CD8-positive, alpha-beta memory T cell (primary cell): ENCODE measurements at regions of chr3 and their contacts with region 1.

Region 1: GRCh38 chr3:38521391-38521987 is 25.3 kb downstream of the EXOG start:
- DNase-seq: peak; percentile 21 to 74 (median 51)
- H3K4me3 ChIP-seq: no peak overlapping the region
- H3K4me3 Mint-ChIP-seq: peak overlapping the region in 1 of 7 donors; percentile 21
- H3K27ac ChIP-seq: no peak overlapping the region
- H3K27ac Mint-ChIP-seq: peak overlapping the region in 3 of 8 donors; percentile 43 to 95 (median 77)
- H3K4me1 ChIP-seq: peaks cover 27% of the 10 kb centered on the region
- H3K4me1 Mint-ChIP-seq: peaks cover 33 to 43% (median 39%) of the 10 kb centered on the region in 3 donors
- H3K27me3 ChIP-seq: no peaks in the 10 kb centered on the region
- H3K27me3 Mint-ChIP-seq: no peaks in the 10 kb centered on the region

Region 2: GRCh38 chr3:38496131-38496910 is 25.2 kb before region 1 on chr3 and contains the start of gene EXOG:
- CTCF ChIA-PET with region 1: interaction called, 22 read pairs
- POLR2A ChIA-PET with region 1: interaction called, 3 read pairs
- DNase-seq: peak; percentile 85 to 96 (median 94)
- H3K4me3 ChIP-seq: peak within 1 kb of the TSS; percentile 87
- H3K4me3 Mint-ChIP-seq: peak within 1 kb of the TSS; percentile 95 to 99 (median 97)
- H3K27ac ChIP-seq: peak within 1 kb of the TSS; percentile 49
- H3K27ac Mint-ChIP-seq: peak within 1 kb of the TSS; percentile 71 to 98 (median 90)
- H3K4me1 ChIP-seq: peaks cover 10% of the 10 kb centered on the region
- H3K4me1 Mint-ChIP-seq: peaks cover 18 to 33% (median 30%) of the 10 kb centered on the region in 3 donors
- H3K27me3 ChIP-seq: no peaks in the 10 kb centered on the region
- H3K27me3 Mint-ChIP-seq: no peaks in the 10 kb centered on the region
- total RNA-seq, gene EXOG: 17.7 to 19.0 TPM

Region 3: DNA sequence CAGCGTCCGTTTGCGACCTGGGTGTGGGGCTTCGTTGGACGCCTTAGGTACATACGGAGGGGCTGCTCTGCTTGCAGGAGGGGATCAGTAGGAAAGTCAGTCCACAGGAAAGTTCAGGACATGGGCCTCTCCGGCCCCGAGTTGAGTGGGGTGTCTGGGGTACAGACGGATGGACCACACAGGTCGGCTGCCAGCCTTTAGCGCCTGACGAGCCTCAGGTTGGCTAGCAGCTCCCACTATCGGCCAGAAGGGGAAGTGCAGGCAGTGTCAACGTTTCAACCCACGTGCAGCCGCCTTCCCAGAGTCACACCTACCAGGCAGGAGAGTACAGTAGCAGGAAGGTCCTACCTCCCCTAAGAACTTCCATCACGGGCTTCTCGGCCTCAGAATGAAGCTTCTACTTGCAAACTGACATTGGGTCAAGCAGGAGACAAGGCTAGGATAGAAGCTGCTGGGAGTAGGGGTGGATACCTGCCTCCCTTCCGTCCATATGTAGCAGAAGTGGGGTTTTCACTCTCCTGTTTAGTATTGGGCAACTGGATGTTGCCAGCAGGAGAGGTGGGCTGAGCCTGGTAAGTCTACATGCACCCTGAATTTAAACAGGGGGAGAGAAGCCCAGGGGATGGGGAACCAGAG is 129.8 kb after region 1 on chr3:
- CTCF ChIA-PET with region 1: interaction called, 79 read pairs
- POLR2A ChIA-PET with region 1: interaction called, 3 read pairs
- DNase-seq: peak; percentile 42 to 79 (median 54)
- H3K4me3 ChIP-seq: no peak overlapping the region
- H3K4me3 Mint-ChIP-seq: peak overlapping the region in 3 of 7 donors; percentile 34 to 71 (median 59)
- H3K27ac ChIP-seq: no peak overlapping the region
- H3K27ac Mint-ChIP-seq: peak overlapping the region in 1 of 8 donors; percentile 15
- H3K4me1 ChIP-seq: peaks cover 13% of the 10 kb centered on the region
- H3K4me1 Mint-ChIP-seq: peaks cover 8 to 11% (median 8%) of the 10 kb centered on the region in 3 donors
- H3K27me3 ChIP-seq: peaks cover 25% of the 10 kb centered on the region
- H3K27me3 Mint-ChIP-seq: peaks cover 16 to 26% of the 10 kb centered on the region in 2 donors

Region 4: DNA sequence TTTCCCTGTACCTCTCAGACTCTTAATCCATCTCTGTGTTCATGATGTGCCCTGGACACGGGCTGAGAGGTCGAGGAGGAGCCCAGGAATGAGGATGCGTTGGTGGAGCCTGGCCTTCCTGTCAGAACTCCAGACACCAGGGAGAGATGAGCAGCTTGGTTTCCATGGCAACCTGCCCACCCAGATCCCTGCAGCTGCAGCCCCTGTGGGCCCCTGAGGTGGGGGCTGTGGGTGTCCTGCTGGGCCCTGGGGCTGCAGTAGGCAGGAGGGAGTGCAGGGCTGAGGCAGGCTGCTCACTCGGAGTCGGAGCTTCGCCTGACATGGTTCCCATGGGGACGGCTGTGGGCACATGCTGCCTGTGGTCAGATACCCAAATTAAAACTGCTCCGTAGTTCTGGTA is 302.2 kb after region 1 on chr3:
- CTCF ChIA-PET with region 1: no interaction called
- POLR2A ChIA-PET with region 1: no interaction called
- DNase-seq: no peak
- H3K4me3 ChIP-seq: no peak overlapping the region
- H3K4me3 Mint-ChIP-seq: no peak overlapping the region
- H3K27ac ChIP-seq: no peak overlapping the region
- H3K27ac Mint-ChIP-seq: no peak overlapping the region
- H3K4me1 ChIP-seq: no peaks in the 10 kb centered on the region
- H3K4me1 Mint-ChIP-seq: no peaks in the 10 kb centered on the region
- H3K27me3 ChIP-seq: no peaks in the 10 kb centered on the region
- H3K27me3 Mint-ChIP-seq: peaks cover 14 to 29% of the 10 kb centered on the region in 2 donors

Region 5: GRCh38 chr3:39029556-39029955 is 508.1 kb after region 1 on chr3:
- CTCF ChIA-PET with region 1: interaction called, 10 read pairs
- POLR2A ChIA-PET with region 1: no interaction called
- DNase-seq: no peak
- H3K4me3 ChIP-seq: no peak overlapping the region
- H3K4me3 Mint-ChIP-seq: no peak overlapping the region
- H3K27ac ChIP-seq: no peak overlapping the region
- H3K27ac Mint-ChIP-seq: no peak overlapping the region
- H3K4me1 ChIP-seq: no peaks in the 10 kb centered on the region
- H3K4me1 Mint-ChIP-seq: no peaks in the 10 kb centered on the region
- H3K27me3 ChIP-seq: no peaks in the 10 kb centered on the region
- H3K27me3 Mint-ChIP-seq: peaks cover 10 to 37% of the 10 kb centered on the region in 2 donors